Heart left ventricle (tissue), 16 donors: ENCODE measurements at regions of chr20 and their contacts with region 1.

Region 1: DNA sequence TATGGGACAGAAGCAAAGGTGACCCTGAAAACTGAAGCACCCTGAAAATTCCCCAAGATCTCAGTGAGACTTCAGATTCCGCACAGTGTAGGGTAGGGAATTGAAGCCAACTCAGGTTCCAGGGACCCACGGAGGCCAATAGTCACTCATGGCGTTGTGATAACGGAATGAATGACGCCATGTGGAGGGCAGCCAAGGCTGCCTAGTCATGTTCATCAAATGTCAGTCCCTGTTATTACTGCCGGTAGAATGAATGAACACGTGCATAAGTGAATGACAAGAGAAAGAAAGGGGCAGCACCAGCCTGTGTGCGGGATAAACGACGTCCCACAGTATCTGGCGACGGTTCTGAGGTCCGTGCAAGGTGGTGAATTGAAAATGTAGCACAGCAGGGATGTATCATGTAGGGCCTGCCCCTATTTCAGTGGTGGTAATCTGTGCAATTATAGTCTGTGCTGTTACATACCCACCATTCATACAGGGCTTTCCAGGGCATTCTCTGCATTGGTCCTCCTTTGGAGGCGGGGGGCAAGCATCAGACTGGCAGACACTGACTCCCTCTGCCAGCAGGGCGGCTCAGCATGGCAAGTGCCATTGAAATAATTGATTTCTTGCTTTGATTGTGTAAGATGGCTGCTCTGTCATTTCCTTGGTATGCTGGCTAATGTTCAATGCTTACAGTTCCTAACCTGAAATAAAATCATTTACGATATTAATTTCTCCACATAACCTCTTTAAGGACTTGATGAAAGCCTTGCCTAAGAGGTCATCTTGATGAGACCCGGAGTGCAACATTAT is 386.9 kb downstream of the CDH4 start:
- DNase-seq: no peak
- ATAC-seq: no peak
- H3K4me3 ChIP-seq: no peak overlapping the region
- H3K27ac ChIP-seq: no peak overlapping the region
- H3K4me1 ChIP-seq: no peaks in the 10 kb centered on the region
- H3K27me3 ChIP-seq: peaks cover 0 to 25% (median 6%) of the 10 kb centered on the region in 9 donors
- CTCF ChIP-seq: no peak
- POLR2A ChIP-seq: no peak

Region 2: DNA sequence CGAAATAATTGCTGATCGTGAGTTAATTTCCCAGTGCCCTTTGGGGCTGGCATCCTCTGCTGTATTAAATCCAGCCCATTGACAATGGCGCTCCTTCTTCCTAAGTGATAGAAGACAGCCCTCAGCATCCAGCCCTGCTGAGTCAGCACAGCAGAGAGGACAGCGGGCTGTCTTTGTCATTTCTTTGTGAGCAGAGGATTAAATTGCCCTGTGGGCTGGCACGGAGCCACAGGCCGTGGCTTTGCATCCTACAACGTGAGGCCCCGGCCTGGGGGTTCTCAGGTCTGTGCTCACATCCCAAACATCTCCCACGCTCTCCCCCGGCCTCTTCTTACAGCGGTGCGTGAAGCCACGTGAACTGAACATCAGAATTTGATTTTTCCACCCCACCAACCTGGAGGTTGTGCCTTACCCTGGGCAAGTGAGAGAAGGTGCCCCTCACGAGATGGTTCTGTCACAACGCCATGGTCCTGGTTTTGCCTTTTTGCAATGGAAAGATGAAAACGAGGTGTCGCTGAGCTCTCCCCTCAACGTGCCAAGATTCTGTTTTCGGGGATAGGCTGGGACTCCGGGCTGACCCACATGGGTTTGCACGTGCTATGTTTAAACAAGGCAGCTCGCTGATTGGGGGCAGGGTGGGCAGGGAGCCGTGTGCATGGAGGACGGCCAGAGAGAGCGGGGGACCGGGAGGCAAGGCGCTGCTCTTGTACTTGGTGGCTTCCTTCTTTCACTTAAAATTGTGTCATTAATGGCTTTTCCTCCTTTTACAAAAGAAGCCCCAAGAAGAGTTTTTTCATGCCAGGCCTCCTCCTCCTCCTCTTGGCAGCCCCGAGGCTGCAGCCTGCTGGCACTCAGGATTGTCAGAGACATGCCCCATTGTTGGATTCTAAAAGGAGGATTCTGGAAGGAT is 367.4 kb before region 1 on chr20:
- intact Hi-C with region 1: loop called in 1 of 10 experiments (anchors 10 kb)
- DNase-seq: no peak
- ATAC-seq: no peak
- H3K4me3 ChIP-seq: no peak overlapping the region
- H3K27ac ChIP-seq: no peak overlapping the region
- H3K4me1 ChIP-seq: no peaks in the 10 kb centered on the region
- H3K27me3 ChIP-seq: peaks cover 0 to 21% (median 0%) of the 10 kb centered on the region in 9 donors
- CTCF ChIP-seq: no peak
- POLR2A ChIP-seq: no peak